ENCODE measurements at regions of chr7 and their contacts with region 1.

Region 1: DNA sequence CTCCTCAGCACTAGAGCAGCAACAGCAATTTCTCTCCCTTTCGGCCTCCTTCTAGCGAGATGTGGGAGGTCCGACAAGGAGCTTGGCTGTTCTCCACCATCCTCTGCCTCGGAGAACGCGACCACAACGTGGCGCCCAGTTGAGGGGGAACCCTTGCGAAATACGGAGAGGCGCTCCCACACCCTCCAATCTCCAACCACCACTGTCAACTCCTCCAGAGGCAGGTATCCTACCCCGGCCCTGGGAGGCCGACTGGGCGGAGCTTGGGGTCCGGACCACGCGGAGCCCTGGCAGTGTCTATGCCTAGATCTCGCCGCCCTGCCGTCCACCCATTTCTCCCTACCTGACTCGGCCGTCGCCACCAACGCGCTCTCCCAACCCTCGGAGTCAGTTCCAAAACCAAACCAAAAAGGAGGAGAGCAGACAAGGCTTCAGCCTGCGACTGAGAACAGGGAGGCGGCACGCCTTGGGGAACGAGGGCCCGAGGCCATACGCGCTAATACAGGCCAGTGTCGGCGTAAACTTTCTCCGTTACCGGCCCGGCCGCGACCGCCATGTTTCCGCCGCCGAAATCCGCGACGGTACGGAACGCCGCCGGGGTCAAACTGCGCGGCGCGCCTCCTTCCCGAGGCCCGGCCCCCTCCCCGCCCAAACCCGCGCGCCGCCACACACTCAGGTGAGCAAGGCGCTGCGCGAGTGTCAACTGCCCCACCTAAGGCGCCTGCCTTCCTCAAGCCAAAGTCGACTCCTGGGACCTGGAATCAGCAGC is at the start of gene TMEM168:
- DNase-seq: peak; percentile 80 to 91
- ATAC-seq: peak; percentile 85 to 90 (median 86)
- H3K4me3 ChIP-seq: peak within 1 kb of the TSS; percentile 94
- H3K4me3 Mint-ChIP-seq: peak within 1 kb of the TSS; percentile 96
- H3K27ac ChIP-seq: peak within 1 kb of the TSS; percentile 89
- H3K27ac Mint-ChIP-seq: peak within 1 kb of the TSS; percentile 89 to 91
- H3K4me1 ChIP-seq: peaks cover 9% of the 10 kb centered on the region
- H3K4me1 Mint-ChIP-seq: peaks cover 35% of the 10 kb centered on the region in 2 donors
- H3K27me3 ChIP-seq: no peaks in the 10 kb centered on the region
- H3K27me3 Mint-ChIP-seq: no peaks in the 10 kb centered on the region
- CTCF ChIP-seq: no peak
- total RNA-seq, gene TMEM168: 18.2 to 21.0 (median 20.0) TPM

Region 2: GRCh38 chr7:112481833-112482670 is 307.9 kb before region 1 on chr7:
- intact Hi-C with region 1: no loop called
- DNase-seq: no peak
- ATAC-seq: no peak
- H3K4me3 ChIP-seq: no peak overlapping the region
- H3K4me3 Mint-ChIP-seq: no peak overlapping the region
- H3K27ac ChIP-seq: no peak overlapping the region
- H3K27ac Mint-ChIP-seq: no peak overlapping the region
- H3K4me1 ChIP-seq: no peaks in the 10 kb centered on the region
- H3K4me1 Mint-ChIP-seq: no peaks in the 10 kb centered on the region
- H3K27me3 ChIP-seq: no peaks in the 10 kb centered on the region
- H3K27me3 Mint-ChIP-seq: no peaks in the 10 kb centered on the region
- CTCF ChIP-seq: no peak

Region 3: DNA sequence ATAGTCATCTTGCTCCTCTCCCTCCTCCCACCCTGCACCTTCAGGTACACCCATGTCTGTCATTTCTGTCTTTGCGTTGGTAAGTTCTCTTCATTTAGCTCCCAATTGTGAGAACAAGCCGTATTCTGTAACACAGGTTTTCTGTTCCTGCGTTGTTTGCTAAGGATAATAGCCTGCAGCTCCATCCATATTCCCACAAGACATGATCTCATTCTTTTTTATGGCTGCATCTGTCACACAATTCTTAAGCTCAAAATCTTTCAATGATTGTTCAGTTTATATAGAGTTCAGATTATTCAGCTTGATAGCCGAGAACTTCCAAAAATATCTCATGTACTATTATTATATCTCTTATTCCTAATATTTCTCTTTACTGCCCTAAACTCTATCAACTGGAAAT is 16.2 kb after region 1 on chr7:
- intact Hi-C with region 1: no loop called
- DNase-seq: no peak
- ATAC-seq: no peak
- H3K4me3 ChIP-seq: no peak overlapping the region
- H3K4me3 Mint-ChIP-seq: no peak overlapping the region
- H3K27ac ChIP-seq: no peak overlapping the region
- H3K27ac Mint-ChIP-seq: no peak overlapping the region
- H3K4me1 ChIP-seq: no peaks in the 10 kb centered on the region
- H3K4me1 Mint-ChIP-seq: no peaks in the 10 kb centered on the region
- H3K27me3 ChIP-seq: no peaks in the 10 kb centered on the region
- H3K27me3 Mint-ChIP-seq: peaks cover 7 to 14% of the 10 kb centered on the region in 2 donors
- CTCF ChIP-seq: no peak

Region 4: GRCh38 chr7:112939574-112940314 is 149.7 kb after region 1 on chr7:
- intact Hi-C with region 1: loop called (anchors 10 kb)
- DNase-seq: peak; percentile 97 to 100
- ATAC-seq: peak; percentile 94 to 99 (median 97)
- H3K4me3 ChIP-seq: peak overlapping the region; percentile 63
- H3K4me3 Mint-ChIP-seq: peak overlapping the region; percentile 89
- H3K27ac ChIP-seq: peak overlapping the region; percentile 71
- H3K27ac Mint-ChIP-seq: peak overlapping the region; percentile 85 to 89
- H3K4me1 ChIP-seq: peaks cover 15% of the 10 kb centered on the region
- H3K4me1 Mint-ChIP-seq: peaks cover 32 to 52% of the 10 kb centered on the region in 2 donors
- H3K27me3 ChIP-seq: peaks cover 5% of the 10 kb centered on the region
- H3K27me3 Mint-ChIP-seq: peaks cover 4 to 9% of the 10 kb centered on the region in 2 donors
- CTCF ChIP-seq: no peak